Posterior cingulate gyrus (tissue), 11 donors: ENCODE measurements at regions of chr5 and their contacts with region 1.

Region 1: DNA sequence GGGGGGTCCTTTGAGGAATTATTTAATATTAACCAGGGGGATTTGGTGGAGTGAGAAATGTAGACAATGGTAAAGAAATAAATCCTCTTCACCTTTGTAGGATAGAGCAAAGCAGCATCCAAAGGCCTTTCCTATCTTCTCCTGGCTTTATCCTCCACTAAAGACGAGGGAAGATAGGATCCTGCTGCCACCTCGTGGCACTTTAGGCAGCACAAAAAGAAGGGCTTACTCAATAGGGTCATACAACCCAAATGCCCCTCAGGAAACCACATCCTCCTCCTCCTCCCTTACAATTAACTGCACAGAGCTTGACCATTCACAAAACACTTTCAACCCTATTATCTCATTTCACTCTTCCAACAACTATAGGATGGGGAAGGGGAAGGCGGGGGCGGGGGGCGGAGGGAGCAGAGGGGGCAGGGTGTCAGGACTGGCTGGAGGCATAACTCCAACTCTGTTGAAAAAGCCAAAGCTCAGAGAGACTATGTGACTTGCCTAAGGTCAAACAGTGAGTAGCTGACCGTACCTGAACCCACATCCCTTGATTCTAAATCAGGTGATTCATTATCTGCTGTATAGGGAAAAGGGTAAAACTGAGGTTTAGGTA is 45.4 kb upstream of the MYOT start:
- DNase-seq: peak in 8 of 10 donors; percentile 22 to 91 (median 52)

Region 2: GRCh38 chr5:137778772-137779564 is 43.3 kb before region 1 on chr5:
- intact Hi-C with region 1: loop called (anchors 1 kb)
- DNase-seq: no peak

Region 3: DNA sequence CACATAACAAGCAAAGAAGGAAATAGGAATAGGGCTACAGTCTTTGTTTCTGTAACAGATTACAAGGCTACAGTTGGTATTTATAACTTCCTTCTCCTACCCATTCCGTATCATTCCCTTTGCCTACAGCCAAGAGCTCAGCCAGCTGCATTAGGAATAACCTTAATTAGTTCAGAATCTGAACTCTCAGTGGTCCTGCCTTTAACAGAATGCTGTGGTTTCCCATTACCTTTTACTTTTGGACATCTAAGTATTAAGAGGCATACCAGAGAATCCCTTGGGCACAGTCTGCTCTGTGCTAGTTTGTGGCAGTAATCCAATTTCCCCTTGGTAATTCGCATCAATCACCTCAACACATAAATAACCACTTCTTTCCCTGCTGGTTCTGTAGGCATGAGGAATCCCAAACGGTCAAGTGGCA is 111.2 kb after region 1 on chr5:
- intact Hi-C with region 1: loop called (anchors 10 kb)
- DNase-seq: no peak

Region 4: DNA sequence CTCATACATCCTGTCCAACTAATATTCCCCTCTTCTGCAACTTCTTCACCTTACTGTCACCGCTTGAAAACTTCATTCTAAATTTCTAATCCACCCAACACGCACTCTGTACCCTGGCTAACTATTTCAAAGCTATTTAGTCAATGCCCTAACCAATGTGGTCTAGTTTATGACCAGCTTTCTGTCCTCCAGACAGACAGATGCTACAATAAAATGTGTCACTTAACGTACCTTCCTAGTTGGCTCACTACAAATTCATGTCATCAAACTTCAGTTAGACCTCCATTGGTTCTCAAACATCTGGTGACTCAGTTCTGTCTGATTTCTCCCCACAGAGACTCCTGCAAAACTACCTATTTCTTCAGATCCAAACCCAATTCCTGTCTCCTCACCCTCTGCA is 152.9 kb after region 1 on chr5:
- intact Hi-C with region 1: no loop called
- DNase-seq: no peak